Vagina (tissue), 2 donors: ENCODE measurements at regions of chr13 and their contacts with region 1.

Region 1: GRCh38 chr13:48571126-48571913 is 38.4 kb upstream of the RCBTB2 start:
- DNase-seq: no peak
- H3K4me3 ChIP-seq: peak overlapping the region; percentile 20 to 24
- H3K27ac ChIP-seq: peak overlapping the region; percentile 88
- H3K4me1 ChIP-seq: peaks cover 69% of the 10 kb centered on the region
- H3K27me3 ChIP-seq: no peaks in the 10 kb centered on the region
- CTCF ChIP-seq: no peak
- POLR2A ChIP-seq: no peak

Region 2: DNA sequence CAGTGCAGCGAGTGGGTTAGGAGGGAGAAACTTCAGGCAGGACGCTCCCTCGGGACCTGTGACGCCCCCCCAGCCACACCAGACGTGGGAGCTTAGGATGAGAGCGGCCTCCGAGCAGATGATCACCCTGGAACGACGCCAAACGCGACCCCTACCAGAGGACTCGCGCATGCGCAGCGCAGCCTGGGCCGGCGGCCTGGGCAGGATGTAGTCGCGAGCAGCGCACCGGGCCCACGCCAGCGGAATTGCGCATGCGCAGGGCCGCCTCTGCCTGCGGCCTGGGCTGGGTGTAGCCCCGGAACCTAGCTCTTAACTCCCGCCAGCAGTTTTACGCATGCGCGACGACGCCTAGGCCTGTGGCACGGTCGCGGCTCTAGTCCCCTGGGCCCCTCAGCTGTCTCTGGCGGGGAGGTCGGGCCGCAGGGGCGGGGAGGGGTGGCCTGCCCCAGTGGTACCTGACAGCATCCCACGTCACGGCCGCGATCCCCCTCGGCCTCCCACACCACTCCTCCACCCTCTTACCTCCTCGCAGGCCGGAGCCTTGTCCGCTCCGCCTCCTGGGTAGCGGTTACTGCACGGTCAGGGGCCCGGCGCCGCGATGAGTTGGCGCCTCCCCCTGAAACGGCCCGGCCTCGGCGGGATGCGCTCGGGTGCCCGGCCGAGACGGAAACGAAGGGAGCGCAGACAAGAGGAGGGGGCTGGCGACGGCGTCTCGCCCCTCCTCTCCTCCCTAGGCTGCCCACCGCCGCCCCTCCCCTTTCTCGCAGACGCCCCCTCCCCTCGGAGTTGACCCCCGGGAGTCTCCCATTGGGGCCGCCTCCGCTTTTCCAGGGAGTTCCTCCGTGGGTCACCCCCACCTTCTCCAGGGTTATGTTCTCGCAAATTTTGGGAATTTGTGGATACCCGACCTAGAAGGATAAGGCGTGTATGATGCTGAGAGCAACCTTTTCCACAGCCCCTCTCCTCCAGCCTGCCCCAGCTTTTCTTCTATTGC is 38.5 kb before region 1 on chr13 and contains the start of gene RCBTB2:
- intact Hi-C with region 1: loop called (anchors 5 kb)
- DNase-seq: peak in 1 of 2 donors; percentile 97
- H3K4me3 ChIP-seq: peak within 1 kb of the TSS; percentile 63 to 80
- H3K27ac ChIP-seq: peak within 1 kb of the TSS; percentile 98
- H3K4me1 ChIP-seq: peaks cover 23% of the 10 kb centered on the region
- H3K27me3 ChIP-seq: no peaks in the 10 kb centered on the region
- CTCF ChIP-seq: no peak
- POLR2A ChIP-seq: peak in 1 of 2 donors; percentile 83
- total RNA-seq, gene RCBTB2: 14.7 TPM

Region 3: DNA sequence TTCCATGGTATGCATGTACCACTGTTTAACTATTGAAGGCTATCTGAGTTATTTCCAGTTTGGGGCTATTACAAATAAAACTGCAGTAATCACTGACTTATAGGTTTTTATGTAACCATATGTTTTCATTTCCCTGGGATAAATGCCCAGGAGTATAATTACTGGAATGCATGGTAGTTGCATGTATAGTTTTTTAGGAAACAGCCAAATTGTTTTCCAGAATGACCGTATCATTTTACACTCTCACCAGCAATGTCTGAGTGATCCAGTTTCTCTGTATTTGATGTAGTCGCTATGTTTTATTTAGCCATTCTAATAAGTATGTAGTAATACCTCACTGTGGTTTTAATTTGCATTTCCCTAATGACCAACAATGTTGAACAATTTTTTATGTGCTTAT is 124.5 kb after region 1 on chr13:
- intact Hi-C with region 1: no loop called
- DNase-seq: no peak
- H3K4me3 ChIP-seq: no peak overlapping the region
- H3K27ac ChIP-seq: no peak overlapping the region
- H3K4me1 ChIP-seq: no peaks in the 10 kb centered on the region
- H3K27me3 ChIP-seq: no peaks in the 10 kb centered on the region
- CTCF ChIP-seq: no peak
- POLR2A ChIP-seq: no peak